ENCODE measurements at regions of chr3 and their contacts with region 1.

Region 1: DNA sequence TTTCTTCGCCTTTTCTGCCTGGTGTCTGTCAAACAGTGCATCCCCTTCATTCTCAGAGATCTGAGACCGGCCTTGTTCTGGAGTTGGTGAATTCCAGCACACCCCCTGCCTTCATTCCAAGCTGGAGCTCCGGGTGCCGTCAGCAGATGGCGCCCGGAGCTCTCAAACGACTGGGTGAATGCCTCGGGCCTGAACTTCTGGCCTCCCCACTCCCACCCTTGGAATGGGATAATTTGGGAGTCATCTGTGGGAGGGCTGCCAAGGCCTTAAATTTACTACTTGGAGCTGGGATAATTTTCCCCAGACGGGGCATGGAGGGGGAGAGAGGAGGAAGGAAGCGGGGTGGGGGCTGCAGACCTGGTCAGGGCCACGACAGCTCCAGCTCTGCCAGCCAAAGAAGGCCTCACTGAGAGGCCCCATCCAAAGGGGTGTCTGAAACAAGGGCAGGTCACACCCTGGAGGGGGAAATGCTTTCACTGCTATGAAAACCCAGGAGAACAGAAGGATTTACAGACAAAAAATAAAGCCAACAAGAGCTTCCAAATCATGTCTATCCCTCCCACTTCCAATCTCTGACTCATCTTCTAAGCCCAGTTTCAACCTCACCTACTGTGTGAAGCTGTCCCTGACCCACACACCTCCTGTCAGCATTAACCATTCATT is 187.9 kb downstream of the OPA1 start:
- DNase-seq: peak; percentile 80 to 87
- H3K4me3 ChIP-seq: no peak overlapping the region
- H3K4me3 Mint-ChIP-seq: peak overlapping the region; percentile 4
- H3K27ac Mint-ChIP-seq: peak overlapping the region; percentile 98
- H3K4me1 ChIP-seq: peaks cover 76% of the 10 kb centered on the region
- H3K4me1 Mint-ChIP-seq: peaks cover 63% of the 10 kb centered on the region
- H3K27me3 ChIP-seq: no peaks in the 10 kb centered on the region
- H3K27me3 Mint-ChIP-seq: no peaks in the 10 kb centered on the region
- CTCF ChIP-seq: peak; percentile 81 to 89

Region 2: GRCh38 chr3:193743702-193744047 is 37.3 kb before region 1 on chr3:
- CTCF ChIA-PET with region 1: interaction called, 13 read pairs
- POLR2A ChIA-PET with region 1: interaction called, 7 read pairs
- intact Hi-C with region 1: loop called (anchors 1 kb)
- DNase-seq: peak in 1 of 2 experiments; percentile 57
- H3K4me3 ChIP-seq: peak overlapping the region; percentile 35
- H3K4me3 Mint-ChIP-seq: peak overlapping the region; percentile 77
- H3K27ac Mint-ChIP-seq: peak overlapping the region; percentile 87
- H3K4me1 ChIP-seq: peaks cover 30% of the 10 kb centered on the region
- H3K4me1 Mint-ChIP-seq: peaks cover 24% of the 10 kb centered on the region
- H3K27me3 ChIP-seq: no peaks in the 10 kb centered on the region
- H3K27me3 Mint-ChIP-seq: no peaks in the 10 kb centered on the region
- CTCF ChIP-seq: no peak

Region 3: DNA sequence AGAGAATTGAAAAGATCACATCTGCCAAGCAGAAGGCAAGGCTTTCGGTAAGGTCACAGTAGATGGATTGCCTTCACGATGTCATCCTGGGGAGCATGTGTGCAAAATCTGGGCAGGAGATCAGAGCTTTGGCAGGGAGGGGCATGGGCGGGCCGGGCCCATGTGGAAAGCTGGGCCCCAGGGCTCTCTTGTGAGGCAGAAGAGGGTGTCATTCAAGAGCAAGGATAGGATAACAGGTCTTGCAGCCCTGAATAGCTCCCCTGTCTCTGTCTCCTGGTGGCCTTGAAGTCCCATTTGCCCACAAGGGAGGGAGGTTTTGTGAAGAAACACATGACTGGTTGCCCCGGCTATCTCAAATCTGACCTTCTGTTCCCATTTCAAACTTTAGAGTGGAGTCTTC is 16.0 kb before region 1 on chr3:
- CTCF ChIA-PET with region 1: no interaction called
- POLR2A ChIA-PET with region 1: no interaction called
- intact Hi-C with region 1: no loop called
- DNase-seq: no peak
- H3K4me3 ChIP-seq: no peak overlapping the region
- H3K4me3 Mint-ChIP-seq: no peak overlapping the region
- H3K27ac Mint-ChIP-seq: no peak overlapping the region
- H3K4me1 ChIP-seq: no peaks in the 10 kb centered on the region
- H3K4me1 Mint-ChIP-seq: no peaks in the 10 kb centered on the region
- H3K27me3 ChIP-seq: no peaks in the 10 kb centered on the region
- H3K27me3 Mint-ChIP-seq: no peaks in the 10 kb centered on the region
- CTCF ChIP-seq: no peak

Region 4: DNA sequence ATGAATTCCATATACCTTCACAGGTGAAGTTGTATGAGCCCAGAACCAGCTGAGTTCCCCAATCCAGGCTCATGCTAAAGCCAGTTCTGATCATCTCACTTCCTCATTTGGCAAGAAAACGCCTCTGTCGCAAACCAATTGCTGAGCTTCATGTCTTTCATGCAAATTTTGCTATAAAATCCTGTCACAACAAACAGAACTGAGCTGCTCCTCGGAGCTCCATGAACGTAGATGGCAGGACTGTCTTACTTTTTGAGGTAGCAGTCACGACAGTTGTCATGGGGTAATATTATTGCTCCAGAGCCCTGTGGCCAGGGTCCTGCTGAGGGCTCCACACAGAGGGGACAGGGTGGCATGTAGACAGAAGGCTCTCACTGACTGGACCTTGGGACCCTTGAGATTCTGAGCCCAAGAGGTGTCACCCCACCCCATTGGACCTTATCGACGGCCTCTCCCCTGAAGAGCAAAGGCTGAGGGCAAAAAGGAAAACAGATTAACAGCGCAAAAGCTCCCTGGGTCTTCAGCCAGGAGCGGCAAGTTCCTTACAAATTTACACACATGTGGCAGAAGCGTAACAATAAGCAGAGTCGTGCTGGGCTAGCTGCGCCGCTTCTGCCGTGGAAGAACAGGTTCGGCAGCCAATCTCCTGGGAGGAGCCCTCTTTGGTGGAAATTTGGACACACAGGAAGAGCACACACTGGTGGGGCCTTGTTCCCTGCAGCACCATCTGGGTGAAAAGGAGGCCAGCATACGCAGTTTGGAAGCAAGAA is 61.3 kb after region 1 on chr3:
- CTCF ChIA-PET with region 1: interaction called, 3 read pairs
- POLR2A ChIA-PET with region 1: interaction called, 13 read pairs
- intact Hi-C with region 1: loop called (anchors 1 kb)
- DNase-seq: peak in 1 of 2 experiments; percentile 48
- H3K4me3 ChIP-seq: peak overlapping the region; percentile 37
- H3K4me3 Mint-ChIP-seq: peak overlapping the region; percentile 73
- H3K27ac Mint-ChIP-seq: peak overlapping the region; percentile 92
- H3K4me1 ChIP-seq: peaks cover 77% of the 10 kb centered on the region
- H3K4me1 Mint-ChIP-seq: peaks cover 50% of the 10 kb centered on the region
- H3K27me3 ChIP-seq: no peaks in the 10 kb centered on the region
- H3K27me3 Mint-ChIP-seq: no peaks in the 10 kb centered on the region
- CTCF ChIP-seq: no peak

Region 5: DNA sequence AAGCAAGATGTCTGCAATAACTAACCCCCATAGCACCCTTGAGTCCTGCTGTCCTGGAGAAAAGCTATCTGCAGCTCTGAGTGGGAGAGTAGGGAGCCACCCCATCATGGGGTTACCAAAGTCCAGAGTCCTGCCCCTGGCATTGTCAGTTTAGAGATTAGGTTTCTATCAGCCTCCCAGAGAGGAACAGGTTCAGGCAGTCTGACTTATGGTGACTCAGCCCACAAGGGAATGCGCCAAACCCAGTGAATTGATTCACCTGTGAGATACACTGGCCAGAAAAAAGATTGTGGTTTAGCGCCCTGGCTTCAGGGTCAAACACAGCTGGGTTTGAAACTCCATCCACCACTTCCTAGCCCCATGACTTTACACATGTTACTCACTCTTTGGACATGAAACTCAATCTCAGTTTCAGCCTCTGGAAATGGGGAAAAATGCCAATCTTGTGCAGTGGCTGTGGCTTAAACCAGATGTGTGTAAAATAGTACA is 91.4 kb after region 1 on chr3:
- CTCF ChIA-PET with region 1: no interaction called
- POLR2A ChIA-PET with region 1: interaction called, 3 read pairs
- intact Hi-C with region 1: loop called (anchors 1 kb)
- DNase-seq: peak; percentile 91 to 94
- H3K4me3 ChIP-seq: no peak overlapping the region
- H3K4me3 Mint-ChIP-seq: peak overlapping the region; percentile 50
- H3K27ac Mint-ChIP-seq: peak overlapping the region; percentile 88
- H3K4me1 ChIP-seq: peaks cover 83% of the 10 kb centered on the region
- H3K4me1 Mint-ChIP-seq: peaks cover 74% of the 10 kb centered on the region
- H3K27me3 ChIP-seq: no peaks in the 10 kb centered on the region
- H3K27me3 Mint-ChIP-seq: no peaks in the 10 kb centered on the region
- CTCF ChIP-seq: no peak

Region 6: GRCh38 chr3:193917158-193917557 is 136.2 kb after region 1 on chr3:
- CTCF ChIA-PET with region 1: interaction called, 3 read pairs
- POLR2A ChIA-PET with region 1: no interaction called
- intact Hi-C with region 1: loop called (anchors 1 kb)
- DNase-seq: no peak
- H3K4me3 ChIP-seq: no peak overlapping the region
- H3K4me3 Mint-ChIP-seq: no peak overlapping the region
- H3K27ac Mint-ChIP-seq: peak overlapping the region; percentile 65
- H3K4me1 ChIP-seq: peaks cover 55% of the 10 kb centered on the region
- H3K4me1 Mint-ChIP-seq: peaks cover 46% of the 10 kb centered on the region
- H3K27me3 ChIP-seq: no peaks in the 10 kb centered on the region
- H3K27me3 Mint-ChIP-seq: no peaks in the 10 kb centered on the region
- CTCF ChIP-seq: no peak

Region 7: DNA sequence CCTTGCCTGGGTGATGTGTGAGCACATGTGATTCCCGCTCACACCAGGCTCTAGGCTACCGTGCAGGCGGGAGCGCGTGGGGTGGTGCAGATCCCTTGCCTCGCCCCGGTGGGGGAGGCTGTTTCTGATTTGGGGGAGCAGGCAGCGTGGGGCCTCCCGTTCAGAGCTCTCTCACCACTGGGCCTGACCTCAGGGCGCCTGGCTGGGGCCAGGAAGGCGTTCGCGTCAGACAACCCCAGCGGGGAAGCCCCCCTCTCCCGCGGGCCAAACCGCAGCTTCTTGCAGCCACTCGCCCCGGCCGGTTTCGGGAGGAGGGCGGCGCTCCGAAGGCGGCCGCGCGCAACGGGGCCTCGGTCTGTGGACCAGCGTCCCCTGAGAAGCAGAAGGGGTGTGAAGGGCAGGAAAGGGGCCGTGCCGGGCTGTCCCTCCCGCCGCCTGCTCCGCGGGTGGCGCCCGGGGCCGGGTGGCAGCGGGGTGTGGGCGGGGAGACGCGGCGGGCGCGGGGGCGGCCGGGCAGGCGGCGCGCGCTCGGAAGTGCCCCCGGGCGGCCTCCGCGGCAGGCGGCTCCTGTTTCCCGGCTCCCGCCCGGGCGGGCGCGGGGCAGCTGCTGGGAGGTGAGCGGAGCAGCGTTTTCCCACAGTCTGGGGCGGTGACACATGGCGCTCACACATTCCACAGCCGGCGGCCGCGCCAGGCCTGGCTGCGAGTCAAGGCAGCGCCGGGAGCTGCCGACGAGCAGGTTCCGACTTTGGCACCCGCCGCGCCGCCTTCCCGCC is 289.9 kb after region 1 on chr3:
- CTCF ChIA-PET with region 1: interaction called, 3 read pairs
- POLR2A ChIA-PET with region 1: interaction called, 5 read pairs
- intact Hi-C with region 1: loop called (anchors 5 kb)
- DNase-seq: peak; percentile 87 to 89
- H3K4me3 ChIP-seq: peak overlapping the region; percentile 52
- H3K4me3 Mint-ChIP-seq: peak overlapping the region; percentile 88
- H3K27ac Mint-ChIP-seq: peak overlapping the region; percentile 94
- H3K4me1 ChIP-seq: peaks cover 44% of the 10 kb centered on the region
- H3K4me1 Mint-ChIP-seq: peaks cover 33% of the 10 kb centered on the region
- H3K27me3 ChIP-seq: no peaks in the 10 kb centered on the region
- H3K27me3 Mint-ChIP-seq: no peaks in the 10 kb centered on the region
- CTCF ChIP-seq: no peak

Region 8: DNA sequence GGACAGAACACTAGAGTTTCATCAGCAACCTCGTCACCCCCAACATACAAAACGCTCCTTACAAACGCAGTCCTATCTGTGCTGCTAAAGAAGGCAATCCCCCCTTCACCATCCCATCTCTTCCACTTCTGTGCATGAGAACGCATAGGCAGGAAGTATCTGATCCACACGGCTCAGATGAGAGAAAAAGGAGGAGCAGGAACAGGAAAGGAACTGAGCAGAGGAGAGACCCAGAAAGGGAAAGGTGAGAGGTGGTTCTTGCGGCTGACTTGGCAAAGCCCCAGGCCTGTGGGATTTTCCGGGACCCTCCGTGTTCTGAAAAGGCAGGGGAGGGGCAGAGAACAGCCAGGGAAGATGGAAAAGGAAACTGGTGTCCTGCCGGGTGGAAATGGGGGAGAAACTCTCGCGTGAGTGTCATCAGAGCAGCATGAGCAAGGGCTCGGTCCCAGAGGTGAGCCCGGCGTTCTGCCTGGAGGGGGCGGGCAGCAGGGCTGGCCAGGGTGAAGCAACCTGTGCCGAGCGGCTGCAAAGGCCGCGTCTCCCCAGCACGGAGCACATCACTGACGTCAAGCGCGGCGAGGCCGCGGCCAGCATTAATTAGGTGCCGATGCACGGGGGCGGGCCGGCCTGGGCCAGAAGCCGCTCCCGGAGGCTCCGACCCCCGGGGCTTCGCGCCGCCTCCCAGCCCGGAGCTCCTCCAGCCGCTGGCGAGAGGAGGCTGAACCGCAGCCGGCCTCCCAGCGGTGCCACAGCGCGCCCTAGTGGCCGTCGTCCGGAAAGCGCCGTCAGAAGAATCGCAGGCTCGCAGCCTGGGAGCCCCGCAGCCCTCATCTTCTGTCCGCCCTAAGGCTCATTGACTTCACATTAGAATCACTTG is 534.4 kb after region 1 on chr3:
- CTCF ChIA-PET with region 1: interaction called, 42 read pairs
- POLR2A ChIA-PET with region 1: interaction called, 3 read pairs
- intact Hi-C with region 1: loop called (anchors 1 kb)
- DNase-seq: peak; percentile 92 to 95
- H3K4me3 ChIP-seq: peak overlapping the region; percentile 51
- H3K4me3 Mint-ChIP-seq: peak overlapping the region; percentile 85
- H3K27ac Mint-ChIP-seq: peak overlapping the region; percentile 93
- H3K4me1 ChIP-seq: peaks cover 41% of the 10 kb centered on the region
- H3K4me1 Mint-ChIP-seq: peaks cover 49% of the 10 kb centered on the region
- H3K27me3 ChIP-seq: no peaks in the 10 kb centered on the region
- H3K27me3 Mint-ChIP-seq: no peaks in the 10 kb centered on the region
- CTCF ChIP-seq: peak; percentile 87 to 95